GM12878 (cell line): ENCODE measurements at regions of chr1 and their contacts with region 1.

Region 1: GRCh38 chr1:158124999-158125398 is 55.7 kb upstream of the CD1D start:
- DNase-seq: peak; percentile 26
- ATAC-seq: peak; percentile 94
- H3K4me3 ChIP-seq: no peak overlapping the region
- H3K27ac ChIP-seq: no peak overlapping the region
- H3K4me1 ChIP-seq: peaks cover 4% of the 10 kb centered on the region
- H3K27me3 ChIP-seq: peaks cover 0 to 2% of the 10 kb centered on the region in 2 experiments; a peak in 3 of 4 replicates
- CTCF ChIP-seq: peak; percentile 88 to 95 (median 91)
- EP300 ChIP-seq: no peak
- POLR2A ChIP-seq: no peak
- RAD21 ChIP-seq: peak; percentile 97

Region 2: DNA sequence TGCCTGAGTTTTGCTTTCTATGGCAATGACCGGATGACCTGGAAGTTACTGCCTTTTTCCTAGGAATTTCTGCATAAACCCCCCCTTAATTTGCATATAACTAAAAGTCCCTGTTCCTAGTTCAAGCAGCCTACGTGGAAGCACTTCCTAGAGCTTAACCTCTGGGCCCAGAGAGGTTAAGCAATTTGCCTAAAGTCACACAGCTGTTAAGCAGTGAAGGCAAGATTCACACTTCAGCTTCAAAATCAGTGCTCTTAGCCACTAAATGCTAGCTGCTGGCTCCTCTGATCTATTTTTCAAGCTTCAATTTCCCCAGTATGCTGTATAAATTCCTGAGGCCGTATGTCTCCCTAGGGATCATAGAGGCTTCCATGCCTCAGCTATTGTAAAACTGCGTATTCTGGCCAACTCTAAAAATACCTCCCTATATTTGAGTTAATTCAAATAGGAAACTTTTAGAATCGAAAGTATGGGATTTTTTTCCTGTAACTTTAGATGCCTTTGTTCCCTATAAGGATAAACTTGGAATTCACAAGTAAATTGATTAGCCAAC is 230.3 kb before region 1 on chr1:
- CTCF ChIA-PET with region 1: no interaction called
- POLR2A ChIA-PET with region 1: no interaction called
- RAD21 ChIA-PET with region 1: no interaction called
- SMC1A ChIA-PET with region 1: no interaction called
- in situ Hi-C with region 1: no loop called
- intact Hi-C with region 1: no loop called
- DNase-seq: no peak
- ATAC-seq: no peak
- H3K4me3 ChIP-seq: no peak overlapping the region
- H3K27ac ChIP-seq: no peak overlapping the region
- H3K4me1 ChIP-seq: no peaks in the 10 kb centered on the region
- H3K27me3 ChIP-seq: no peaks in the 10 kb centered on the region
- CTCF ChIP-seq: no peak
- EP300 ChIP-seq: no peak
- POLR2A ChIP-seq: no peak
- RAD21 ChIP-seq: no peak

Region 3: DNA sequence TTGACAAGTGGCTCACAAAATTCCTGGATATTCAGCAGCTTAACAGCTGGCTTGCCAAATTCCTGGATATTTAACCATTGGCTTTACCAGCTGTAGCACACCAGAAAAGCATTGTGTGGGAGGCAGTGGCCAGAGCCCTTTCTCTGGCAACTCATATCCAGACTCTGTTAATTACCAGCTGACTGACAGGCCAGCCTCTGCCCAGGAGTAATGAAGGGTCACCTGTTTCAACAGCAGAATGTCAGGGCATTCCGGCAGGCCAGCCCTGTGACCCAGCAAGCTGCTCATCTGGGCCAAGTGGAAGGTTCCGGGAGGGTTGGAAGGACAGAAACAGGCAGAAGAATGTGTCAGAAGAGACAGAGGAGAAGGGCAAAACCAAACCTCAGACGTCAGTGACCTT is 166.7 kb before region 1 on chr1:
- CTCF ChIA-PET with region 1: interaction called, 90 read pairs
- POLR2A ChIA-PET with region 1: no interaction called
- RAD21 ChIA-PET with region 1: interaction called, 18 read pairs
- SMC1A ChIA-PET with region 1: interaction called, 17 read pairs
- in situ Hi-C with region 1: loop called (anchors 5 kb)
- intact Hi-C with region 1: loop called (anchors 2 kb)
- DNase-seq: no peak
- ATAC-seq: no peak
- H3K4me3 ChIP-seq: no peak overlapping the region
- H3K27ac ChIP-seq: no peak overlapping the region
- H3K4me1 ChIP-seq: peaks cover 6% of the 10 kb centered on the region
- H3K27me3 ChIP-seq: peaks cover 2 to 10% of the 10 kb centered on the region in 2 experiments; a peak in 3 of 4 replicates
- CTCF ChIP-seq: no peak
- EP300 ChIP-seq: no peak
- POLR2A ChIP-seq: no peak
- RAD21 ChIP-seq: no peak

Region 4: DNA sequence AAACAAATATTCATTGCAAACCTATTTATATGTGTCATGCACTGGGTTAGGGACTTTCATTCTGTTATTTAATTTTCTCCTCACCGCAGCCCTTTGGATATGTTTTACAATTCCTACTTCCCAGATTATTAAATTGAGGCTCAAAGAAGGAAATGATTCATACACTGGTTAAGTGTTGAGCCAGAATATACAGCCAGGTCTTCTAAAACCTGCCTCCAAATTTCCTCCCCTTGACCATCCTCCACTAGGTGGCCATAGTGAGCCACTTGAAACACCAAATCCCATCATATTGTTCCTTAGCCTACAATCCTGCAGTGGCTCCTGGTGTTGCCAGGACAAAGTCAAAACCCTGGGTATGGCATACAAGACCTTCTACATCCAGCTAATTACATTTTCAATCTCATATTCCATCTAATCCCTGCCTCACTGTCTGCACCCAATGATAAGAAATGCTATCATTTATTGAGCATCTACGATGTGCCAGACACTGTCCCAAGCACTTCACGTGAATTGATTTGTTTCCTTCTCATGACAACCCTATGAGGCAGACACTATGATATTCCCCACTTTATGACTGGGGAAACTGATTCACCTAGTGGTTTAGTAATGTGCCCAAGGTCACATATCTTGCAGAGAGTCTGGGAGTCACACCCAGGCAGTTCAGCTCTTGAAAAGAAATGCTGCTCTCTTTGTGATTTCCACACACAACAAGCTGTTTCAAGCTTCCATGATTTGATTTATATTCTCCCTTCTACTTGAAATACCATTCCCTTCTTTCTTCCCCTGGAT is 155.1 kb before region 1 on chr1:
- CTCF ChIA-PET with region 1: interaction called, 90 read pairs
- POLR2A ChIA-PET with region 1: no interaction called
- RAD21 ChIA-PET with region 1: interaction called, 10 read pairs
- SMC1A ChIA-PET with region 1: interaction called, 8 read pairs
- in situ Hi-C with region 1: no loop called
- intact Hi-C with region 1: no loop called
- DNase-seq: no peak
- ATAC-seq: 0 out of 3 replicates have a peak, but pooled peaks have one; percentile 29
- H3K4me3 ChIP-seq: no peak overlapping the region
- H3K27ac ChIP-seq: no peak overlapping the region
- H3K4me1 ChIP-seq: no peaks in the 10 kb centered on the region
- H3K27me3 ChIP-seq: peaks cover 0 to 12% of the 10 kb centered on the region in 2 experiments; a peak in 2 of 4 replicates
- CTCF ChIP-seq: peak; percentile 46 to 77 (median 62)
- EP300 ChIP-seq: no peak
- POLR2A ChIP-seq: no peak
- RAD21 ChIP-seq: 0 out of 2 replicates have a peak, but pooled peaks have one; percentile 27

Region 5: DNA sequence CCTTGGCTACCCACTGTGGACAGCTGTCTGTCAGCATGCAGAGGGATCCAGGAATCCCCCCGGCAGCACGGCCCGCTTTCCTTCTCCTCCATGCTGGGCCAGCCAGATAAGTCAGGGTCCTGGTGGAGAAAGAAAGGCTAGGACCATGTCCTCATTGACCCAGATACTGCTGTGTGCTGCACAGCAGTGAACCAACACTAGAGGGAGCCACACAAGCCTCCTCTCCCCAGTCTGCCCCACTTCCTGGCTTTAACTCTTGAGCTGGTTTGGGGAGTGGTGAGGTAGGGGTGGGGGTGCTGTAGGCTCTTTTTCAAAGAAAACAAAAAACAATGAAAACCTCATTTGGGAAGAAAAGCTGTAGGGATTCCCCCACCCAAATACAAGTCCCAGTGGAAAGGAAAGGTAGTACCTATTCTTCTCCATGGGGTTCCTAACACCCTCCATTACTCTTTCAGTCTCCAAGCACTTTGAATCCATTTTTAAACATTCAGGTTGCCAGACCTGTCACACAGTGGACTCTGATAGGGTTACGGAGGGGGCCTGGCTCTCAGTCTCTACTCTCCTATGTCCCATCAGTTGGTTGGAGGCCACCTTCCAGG is 29.2 kb before region 1 on chr1:
- CTCF ChIA-PET with region 1: interaction called, 210 read pairs
- POLR2A ChIA-PET with region 1: no interaction called
- RAD21 ChIA-PET with region 1: interaction called, 36 read pairs
- SMC1A ChIA-PET with region 1: interaction called, 13 read pairs
- in situ Hi-C with region 1: no loop called
- intact Hi-C with region 1: loop called (anchors 1 kb)
- DNase-seq: no peak
- ATAC-seq: peak; percentile 96
- H3K4me3 ChIP-seq: no peak overlapping the region
- H3K27ac ChIP-seq: no peak overlapping the region
- H3K4me1 ChIP-seq: no peaks in the 10 kb centered on the region
- H3K27me3 ChIP-seq: peaks cover 0 to 4% of the 10 kb centered on the region in 2 experiments; a peak in 3 of 4 replicates
- CTCF ChIP-seq: peak; percentile 52 to 81 (median 76)
- EP300 ChIP-seq: no peak
- POLR2A ChIP-seq: no peak
- RAD21 ChIP-seq: peak; percentile 57

Region 6: DNA sequence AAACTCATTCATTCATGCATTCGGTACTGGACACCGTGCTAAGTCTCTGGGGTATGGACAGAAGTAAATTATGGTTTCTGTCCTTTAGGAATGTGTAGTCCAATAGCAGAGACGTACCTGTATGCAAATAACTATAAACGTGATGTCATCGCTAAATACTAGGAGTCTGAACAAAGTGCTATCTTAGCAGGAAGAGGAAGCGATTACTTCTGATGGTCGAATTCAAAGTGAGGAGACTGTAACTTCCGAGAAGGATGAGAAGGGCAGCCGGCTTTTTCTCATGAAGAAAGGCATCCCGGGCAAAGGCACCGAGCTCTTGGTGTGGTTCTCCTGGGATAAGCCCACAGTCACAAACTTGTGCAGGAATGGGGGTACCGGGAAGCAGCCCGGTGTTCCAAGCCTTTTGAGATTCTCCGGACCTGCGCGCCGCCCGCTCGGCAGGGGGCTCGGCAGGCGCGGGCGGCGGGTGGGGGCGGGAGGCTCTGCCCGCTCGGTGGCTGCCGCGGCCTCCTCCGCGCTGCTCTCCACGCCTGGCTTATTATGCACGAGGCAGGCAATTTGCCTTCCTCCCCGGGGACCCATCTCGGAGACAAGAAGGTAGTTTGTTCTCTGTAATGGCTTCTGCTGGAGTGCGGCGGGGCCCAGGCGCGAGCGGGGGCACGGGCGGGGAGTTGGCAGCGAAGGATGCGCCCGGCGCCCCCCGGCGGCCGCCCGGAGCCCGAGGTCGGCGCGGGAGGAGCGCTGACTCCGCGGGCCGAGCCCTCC is 11.8 kb before region 1 on chr1:
- CTCF ChIA-PET with region 1: interaction called, 19 read pairs
- POLR2A ChIA-PET with region 1: no interaction called
- RAD21 ChIA-PET with region 1: interaction called, 8 read pairs
- SMC1A ChIA-PET with region 1: interaction called, 6 read pairs
- in situ Hi-C with region 1: no loop called
- intact Hi-C with region 1: no loop called
- DNase-seq: no peak
- ATAC-seq: peak; percentile 12; the same call in 1 of the 3 replicates
- H3K4me3 ChIP-seq: no peak overlapping the region
- H3K27ac ChIP-seq: no peak overlapping the region
- H3K4me1 ChIP-seq: no peaks in the 10 kb centered on the region
- H3K27me3 ChIP-seq: peaks cover 5 to 19% of the 10 kb centered on the region in 2 experiments
- CTCF ChIP-seq: no peak
- EP300 ChIP-seq: no peak
- POLR2A ChIP-seq: no peak
- RAD21 ChIP-seq: no peak

Region 7: GRCh38 chr1:158329733-158330132 is 204.7 kb after region 1 on chr1:
- CTCF ChIA-PET with region 1: interaction called, 10 read pairs
- POLR2A ChIA-PET with region 1: no interaction called
- RAD21 ChIA-PET with region 1: interaction called, 14 read pairs
- SMC1A ChIA-PET with region 1: interaction called, 8 read pairs
- in situ Hi-C with region 1: no loop called
- intact Hi-C with region 1: no loop called
- DNase-seq: no peak
- ATAC-seq: peak; percentile 84
- H3K4me3 ChIP-seq: no peak overlapping the region
- H3K27ac ChIP-seq: no peak overlapping the region
- H3K4me1 ChIP-seq: peaks cover 5% of the 10 kb centered on the region
- H3K27me3 ChIP-seq: no peaks in the 10 kb centered on the region
- CTCF ChIP-seq: peak; percentile 61 to 69 (median 63)
- EP300 ChIP-seq: no peak
- POLR2A ChIP-seq: no peak
- RAD21 ChIP-seq: peak; percentile 80